GM12878 (cell line): ENCODE measurements at regions of chr1 and their contacts with region 1.

Region 1: DNA sequence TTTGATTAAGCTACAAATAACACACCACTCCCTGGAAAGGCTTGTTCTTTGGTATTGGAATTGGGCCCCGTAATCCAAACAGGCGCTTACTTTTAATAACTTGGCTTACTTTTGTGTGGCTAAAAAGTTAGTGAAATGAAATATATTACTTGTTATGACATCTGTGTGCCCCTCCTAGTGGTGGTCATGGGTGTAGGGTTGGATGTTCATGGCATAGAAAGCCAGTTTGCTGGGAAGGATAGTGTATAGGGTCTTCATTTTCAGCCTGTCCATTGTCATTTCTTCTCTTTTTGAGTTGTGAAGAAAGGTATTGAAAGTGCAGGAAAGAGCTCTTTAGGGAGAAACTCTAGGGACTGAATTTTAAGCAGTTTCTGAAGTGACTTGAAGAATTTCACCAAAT is 5.9 kb downstream of the CDC14A start:
- DNase-seq: no peak
- ATAC-seq: peak; percentile 57
- H3K4me3 ChIP-seq: no peak overlapping the region
- H3K27ac ChIP-seq: no peak overlapping the region
- H3K4me1 ChIP-seq: no peaks in the 10 kb centered on the region
- H3K27me3 ChIP-seq: no peaks in the 10 kb centered on the region
- CTCF ChIP-seq: peak; percentile 47 to 57 (median 47); a peak in 5 of 6 replicates
- EP300 ChIP-seq: no peak
- POLR2A ChIP-seq: no peak
- RAD21 ChIP-seq: peak; percentile 48; the same call in 1 of the 2 replicates

Region 2: GRCh38 chr1:100396651-100397050 is 38.4 kb after region 1 on chr1:
- CTCF ChIA-PET with region 1: interaction called, 8 read pairs
- POLR2A ChIA-PET with region 1: interaction called, 5 read pairs
- RAD21 ChIA-PET with region 1: interaction called, 4 read pairs
- SMC1A ChIA-PET with region 1: interaction called, 18 read pairs
- in situ Hi-C with region 1: no loop called
- intact Hi-C with region 1: no loop called
- DNase-seq: no peak
- ATAC-seq: peak; percentile 48
- H3K4me3 ChIP-seq: no peak overlapping the region
- H3K27ac ChIP-seq: no peak overlapping the region
- H3K4me1 ChIP-seq: no peaks in the 10 kb centered on the region
- H3K27me3 ChIP-seq: no peaks in the 10 kb centered on the region
- CTCF ChIP-seq: no peak
- EP300 ChIP-seq: no peak
- POLR2A ChIP-seq: no peak
- RAD21 ChIP-seq: no peak

Region 3: DNA sequence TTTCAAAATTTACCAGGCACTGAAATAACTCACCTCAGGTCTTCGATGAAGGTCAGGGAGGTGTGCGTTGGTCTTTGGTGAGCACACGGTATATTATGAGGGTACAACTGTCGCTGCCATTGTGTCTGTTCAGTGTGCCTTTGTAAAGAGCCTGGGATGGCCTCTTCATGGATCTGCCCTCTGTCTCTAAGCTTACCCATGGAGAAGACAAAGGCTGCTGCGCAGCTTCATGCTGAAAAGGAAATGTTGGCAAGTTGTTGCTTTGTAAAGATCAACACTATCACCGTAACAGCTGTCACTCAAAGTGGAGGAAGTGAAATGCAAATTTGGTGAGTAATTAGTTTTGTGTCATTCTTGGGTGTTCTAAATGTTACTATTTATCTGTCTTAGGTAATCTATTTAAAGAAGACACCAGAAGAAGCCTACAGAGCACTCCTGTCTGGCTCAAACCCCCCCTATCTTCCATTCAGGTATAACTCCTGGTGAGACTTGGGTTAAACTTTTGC is 65.7 kb after region 1 on chr1:
- CTCF ChIA-PET with region 1: interaction called, 9 read pairs
- POLR2A ChIA-PET with region 1: interaction called, 4 read pairs
- RAD21 ChIA-PET with region 1: interaction called, 3 read pairs
- SMC1A ChIA-PET with region 1: interaction called, 10 read pairs
- in situ Hi-C with region 1: no loop called
- intact Hi-C with region 1: no loop called
- DNase-seq: peak; percentile 24
- ATAC-seq: peak; percentile 74
- H3K4me3 ChIP-seq: no peak overlapping the region
- H3K27ac ChIP-seq: no peak overlapping the region
- H3K4me1 ChIP-seq: peaks cover 11% of the 10 kb centered on the region
- H3K27me3 ChIP-seq: no peaks in the 10 kb centered on the region
- CTCF ChIP-seq: peak in 2 of 3 experiments; percentile 12 to 21; a peak in 1 of 6 replicates
- EP300 ChIP-seq: no peak
- POLR2A ChIP-seq: no peak
- RAD21 ChIP-seq: 0 out of 2 replicates have a peak, but pooled peaks have one; percentile 21